Left cardiac atrium (tissue), 4 donors: ENCODE measurements at regions of chr2 and their contacts with region 1.

Region 1: GRCh38 chr2:46893269-46893945 is 22.2 kb downstream of the MCFD2 start:
- DNase-seq: no peak
- ATAC-seq: no peak

Region 2: DNA sequence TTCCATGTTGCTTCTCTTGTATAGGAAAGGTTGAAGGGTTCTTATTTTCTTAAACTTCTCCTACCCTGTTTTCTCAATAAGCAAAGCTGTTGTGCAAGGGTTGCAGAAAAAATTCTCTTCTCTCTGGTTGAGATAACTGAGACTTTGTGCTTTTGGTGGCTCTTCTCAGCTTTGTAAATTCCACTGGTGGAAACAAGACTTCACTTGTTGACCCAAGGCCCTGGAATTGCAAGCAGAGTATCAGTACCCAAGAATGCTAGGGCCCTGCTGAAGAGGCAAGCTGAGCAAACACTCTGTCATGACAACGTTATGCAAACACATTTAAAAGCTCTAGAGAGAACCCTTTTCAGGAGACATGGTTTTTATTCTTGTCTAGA is 890.9 kb before region 1 on chr2:
- intact Hi-C with region 1: loop called in 1 of 2 experiments (anchors 10 kb)
- DNase-seq: no peak
- ATAC-seq: peak; percentile 49 to 88

Region 3: GRCh38 chr2:46589358-46589757 is 304.0 kb before region 1 on chr2:
- intact Hi-C with region 1: no loop called
- DNase-seq: no peak
- ATAC-seq: no peak

Region 4: DNA sequence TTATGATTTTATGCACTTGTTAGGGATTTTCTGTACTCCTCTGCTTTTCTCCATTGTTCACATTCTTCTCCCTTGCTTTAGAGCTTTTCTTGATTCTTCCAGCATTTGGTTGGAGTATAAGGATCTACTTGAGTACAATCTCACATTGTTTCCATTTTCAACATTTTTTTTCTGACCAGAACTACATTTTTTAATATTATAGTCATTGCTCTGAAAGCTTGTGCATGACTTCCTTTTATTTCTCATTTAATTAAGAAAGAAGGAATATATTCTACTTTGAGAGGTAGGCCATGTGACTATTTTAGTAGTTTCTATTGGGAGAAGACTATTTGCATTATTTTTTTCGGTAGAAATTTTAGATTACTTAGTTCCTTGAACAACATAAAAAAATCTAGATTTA is 213.6 kb before region 1 on chr2:
- intact Hi-C with region 1: no loop called
- DNase-seq: no peak
- ATAC-seq: no peak

Region 5: GRCh38 chr2:46749042-46749531 is 144.3 kb before region 1 on chr2:
- intact Hi-C with region 1: no loop called
- DNase-seq: no peak
- ATAC-seq: peak; percentile 48 to 70

Region 6: GRCh38 chr2:47323009-47323821 is 429.8 kb after region 1 on chr2:
- intact Hi-C with region 1: no loop called
- DNase-seq: peak; percentile 69
- ATAC-seq: peak; percentile 95 to 96